ENCODE measurements at regions of chr7 and their contacts with region 1.

Region 1: DNA sequence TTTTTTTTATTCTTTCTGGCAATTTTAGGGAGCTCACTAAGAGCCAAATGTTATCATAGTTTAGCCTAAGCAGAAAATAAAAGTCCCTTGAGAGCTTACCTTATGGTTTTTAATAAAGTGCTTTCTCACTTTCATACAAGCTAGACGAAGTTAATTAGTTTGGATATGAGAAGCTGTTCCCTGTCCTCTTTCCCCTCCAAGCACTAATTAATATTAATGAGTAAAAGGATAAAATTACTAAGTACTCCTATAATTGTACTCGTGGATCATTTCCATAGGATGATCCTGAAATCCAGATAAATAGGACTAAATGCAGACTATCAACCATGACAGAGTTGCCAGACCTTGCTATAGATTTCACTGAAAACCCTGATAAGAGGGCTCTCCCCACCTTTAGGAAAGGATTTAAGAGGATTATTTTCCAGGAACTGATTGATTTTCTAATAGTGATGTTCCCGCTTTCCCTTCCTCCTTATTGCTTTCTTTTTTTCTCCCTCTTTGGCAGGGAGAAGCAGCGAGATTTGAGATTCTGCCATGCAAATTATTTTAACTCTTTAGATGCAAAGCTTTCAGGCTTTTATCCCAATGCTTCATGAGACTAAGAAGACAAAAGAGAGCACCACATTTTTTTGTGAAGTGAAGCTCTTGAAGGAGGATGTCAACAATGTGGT is 58.3 kb upstream of the HECW1 start:
- DNase-seq: no peak
- H3K4me3 ChIP-seq: no peak overlapping the region
- CTCF ChIP-seq: no peak

Region 2: GRCh38 chr7:42982604-42983115 is 71.5 kb before region 1 on chr7:
- CTCF ChIA-PET with region 1: no interaction called
- POLR2A ChIA-PET with region 1: no interaction called
- DNase-seq: no peak
- H3K4me3 ChIP-seq: no peak overlapping the region
- CTCF ChIP-seq: no peak

Region 3: GRCh38 chr7:43071604-43072003 is 17.4 kb after region 1 on chr7:
- CTCF ChIA-PET with region 1: interaction called, 11 read pairs
- POLR2A ChIA-PET with region 1: no interaction called
- DNase-seq: no peak
- H3K4me3 ChIP-seq: no peak overlapping the region
- CTCF ChIP-seq: no peak

Region 4: GRCh38 chr7:43467406-43467805 is 413.2 kb after region 1 on chr7:
- CTCF ChIA-PET with region 1: no interaction called
- POLR2A ChIA-PET with region 1: no interaction called
- DNase-seq: no peak
- H3K4me3 ChIP-seq: no peak overlapping the region
- CTCF ChIP-seq: no peak